ENCODE measurements at regions of chr7 and their contacts with region 1.

Region 1: GRCh38 chr7:43639858-43640491 is 57.1 kb downstream of the STK17A start:
- DNase-seq: no peak
- H3K4me3 ChIP-seq: no peak overlapping the region
- H3K27ac ChIP-seq: peak overlapping the region; percentile 59 to 68
- H3K4me1 ChIP-seq: no peaks in the 10 kb centered on the region
- H3K27me3 ChIP-seq: no peaks in the 10 kb centered on the region
- CTCF ChIP-seq: no peak
- POLR2A ChIP-seq: no peak

Region 2: DNA sequence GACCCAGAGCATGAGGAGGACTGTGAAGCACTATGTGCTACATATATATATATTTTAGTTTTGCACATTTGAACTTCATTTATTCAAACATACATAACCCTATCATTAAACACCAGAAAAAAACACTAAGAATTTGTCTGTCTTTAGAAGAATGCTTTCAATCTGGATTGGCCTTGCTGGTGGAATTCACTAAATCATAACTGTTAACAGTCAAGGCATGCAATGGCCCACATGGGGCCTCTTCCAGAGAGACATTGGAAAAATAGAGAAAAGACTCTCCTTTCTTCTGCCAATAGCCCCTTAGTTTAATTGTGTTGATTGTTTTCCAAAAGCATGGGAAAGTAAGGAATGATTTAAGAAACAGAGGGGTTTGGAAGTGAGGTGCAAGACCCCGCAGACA is 629.9 kb before region 1 on chr7:
- intact Hi-C with region 1: loop called (anchors 5 kb)
- DNase-seq: no peak
- H3K4me3 ChIP-seq: no peak overlapping the region
- H3K27ac ChIP-seq: no peak overlapping the region
- H3K4me1 ChIP-seq: no peaks in the 10 kb centered on the region
- H3K27me3 ChIP-seq: no peaks in the 10 kb centered on the region
- CTCF ChIP-seq: no peak
- POLR2A ChIP-seq: no peak

Region 3: GRCh38 chr7:43602271-43602670 is 37.7 kb before region 1 on chr7:
- intact Hi-C with region 1: no loop called
- DNase-seq: no peak
- H3K4me3 ChIP-seq: no peak overlapping the region
- H3K27ac ChIP-seq: no peak overlapping the region
- H3K4me1 ChIP-seq: no peaks in the 10 kb centered on the region
- H3K27me3 ChIP-seq: no peaks in the 10 kb centered on the region
- CTCF ChIP-seq: no peak
- POLR2A ChIP-seq: no peak

Region 4: GRCh38 chr7:44123190-44124003 is 483.4 kb after region 1 on chr7 and contains the start of gene POLD2:
- intact Hi-C with region 1: no loop called
- DNase-seq: peak; percentile 96 to 97
- H3K4me3 ChIP-seq: peak within 1 kb of the TSS; percentile 56 to 81 (median 81)
- H3K27ac ChIP-seq: peak within 1 kb of the TSS; percentile 76 to 81
- H3K4me1 ChIP-seq: peaks cover 0 to 4% of the 10 kb centered on the region in 2 donors
- H3K27me3 ChIP-seq: no peaks in the 10 kb centered on the region
- CTCF ChIP-seq: peak in 1 of 3 donors; percentile 23
- POLR2A ChIP-seq: peak; percentile 16
- total RNA-seq, gene POLD2: 38.9 to 49.8 (median 39.7) TPM